Dorsolateral prefrontal cortex (tissue), 120 donors: ENCODE measurements at regions of chr5 and their contacts with region 1.

Region 1: DNA sequence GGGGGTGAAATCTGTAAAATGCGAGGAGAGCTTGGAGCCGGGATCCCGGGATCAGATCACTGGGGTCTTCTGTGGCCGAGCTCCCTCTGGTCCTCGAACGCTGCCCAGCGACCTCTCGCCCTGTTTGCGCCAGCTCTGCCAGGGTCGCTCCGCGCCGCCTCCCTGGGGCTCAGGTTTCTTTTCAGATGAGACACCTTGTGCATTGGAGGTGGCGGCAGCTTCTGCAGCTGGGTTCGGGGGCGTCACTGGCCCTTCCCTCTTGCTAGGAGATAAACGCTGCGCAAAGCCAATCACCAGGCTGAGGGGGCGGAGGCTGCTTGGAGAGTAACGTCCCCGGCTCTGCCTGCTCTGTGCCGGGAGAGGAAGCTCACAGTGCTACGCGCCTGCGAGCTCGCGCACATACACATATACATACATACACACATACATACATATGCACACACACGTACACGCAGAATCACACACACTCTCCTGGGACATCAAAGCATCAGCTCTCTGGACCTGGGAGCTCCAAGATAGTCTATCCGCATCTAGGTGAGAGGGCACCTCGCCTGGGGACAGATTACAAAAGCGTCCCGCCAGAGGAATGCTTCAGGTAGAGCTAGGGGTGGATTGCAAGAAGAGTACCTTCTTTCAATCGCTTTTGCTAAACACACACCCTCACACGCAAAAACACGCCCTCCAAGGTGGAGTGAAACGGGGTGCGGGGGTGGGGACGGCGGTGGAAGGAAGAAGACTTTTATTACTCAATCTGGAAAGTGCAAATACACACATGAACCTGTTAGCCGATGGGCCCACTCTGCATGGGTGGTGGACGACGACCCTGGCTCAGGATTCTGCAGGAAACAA is at the start of gene ST8SIA4:
- DNase-seq: peak; percentile 20 to 89 (median 80)
- H3K4me3 ChIP-seq: peak within 1 kb of the TSS; percentile 43 to 84 (median 65)
- H3K27ac ChIP-seq: peak within 1 kb of the TSS in 47 of 59 donors; percentile 5 to 83 (median 60)
- H3K27me3 ChIP-seq: peaks cover 0 to 32% (median 0%) of the 10 kb centered on the region in 45 donors
- CTCF ChIP-seq: no peak
- total RNA-seq, gene ST8SIA4: 2.7 to 16.8 (median 7.9) TPM

Region 2: GRCh38 chr5:100777680-100778281 is 125.5 kb before region 1 on chr5:
- intact Hi-C with region 1: loop called in 1 of 2 experiments (anchors 10 kb)
- DNase-seq: no peak
- H3K4me3 ChIP-seq: no peak overlapping the region
- H3K27ac ChIP-seq: peak overlapping the region in 9 of 59 donors; percentile 2 to 41 (median 11)
- H3K27me3 ChIP-seq: no peaks in the 10 kb centered on the region
- CTCF ChIP-seq: no peak

Region 3: DNA sequence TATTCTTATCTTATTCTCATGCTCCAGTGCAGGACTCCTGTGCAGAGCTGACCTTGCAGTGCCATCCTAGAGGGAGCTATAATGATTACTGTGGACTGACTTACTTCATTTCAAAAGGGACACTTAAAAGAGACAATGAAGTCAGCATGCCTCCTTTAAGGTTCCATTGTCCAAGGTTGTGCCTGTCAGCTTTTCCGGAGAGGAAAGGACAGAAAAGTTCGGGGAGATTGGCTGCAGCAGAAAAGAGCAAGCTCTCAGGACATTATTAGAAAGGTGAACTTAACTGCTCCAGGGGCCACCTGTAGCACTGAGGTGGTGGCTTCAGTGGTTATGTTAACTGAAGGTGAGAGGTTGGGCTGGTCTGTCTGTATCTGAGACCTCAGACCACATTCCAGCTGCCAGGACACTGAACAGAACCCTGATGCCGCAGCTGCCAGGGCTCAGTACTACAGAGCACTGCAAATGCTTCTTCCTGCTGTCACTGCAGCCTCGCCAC is 113.0 kb before region 1 on chr5:
- intact Hi-C with region 1: loop called in 1 of 2 experiments (anchors 10 kb)
- DNase-seq: no peak
- H3K4me3 ChIP-seq: no peak overlapping the region
- H3K27ac ChIP-seq: no peak overlapping the region
- H3K27me3 ChIP-seq: no peaks in the 10 kb centered on the region
- CTCF ChIP-seq: peak in 12 of 56 donors; percentile 11 to 31 (median 16)